H1 (cell line): ENCODE measurements at regions of chr9 and their contacts with region 1.

Region 1: GRCh38 chr9:136779808-136780207 is 11.3 kb upstream of the TMEM141 start:
- DNase-seq: no peak
- H3K4me3 ChIP-seq: no peak overlapping the region
- H3K27ac ChIP-seq: no peak overlapping the region
- H3K4me1 ChIP-seq: no peaks in the 10 kb centered on the region
- H3K27me3 ChIP-seq: peaks cover 0 to 4% (median 1%) of the 10 kb centered on the region in 4 experiments; a peak in 3 of 7 replicates
- CTCF ChIP-seq: peak in 1 of 3 experiments; percentile 15; a peak in 1 of 4 replicates
- EP300 ChIP-seq: no peak
- POLR2A ChIP-seq: no peak
- RAD21 ChIP-seq: no peak

Region 2: DNA sequence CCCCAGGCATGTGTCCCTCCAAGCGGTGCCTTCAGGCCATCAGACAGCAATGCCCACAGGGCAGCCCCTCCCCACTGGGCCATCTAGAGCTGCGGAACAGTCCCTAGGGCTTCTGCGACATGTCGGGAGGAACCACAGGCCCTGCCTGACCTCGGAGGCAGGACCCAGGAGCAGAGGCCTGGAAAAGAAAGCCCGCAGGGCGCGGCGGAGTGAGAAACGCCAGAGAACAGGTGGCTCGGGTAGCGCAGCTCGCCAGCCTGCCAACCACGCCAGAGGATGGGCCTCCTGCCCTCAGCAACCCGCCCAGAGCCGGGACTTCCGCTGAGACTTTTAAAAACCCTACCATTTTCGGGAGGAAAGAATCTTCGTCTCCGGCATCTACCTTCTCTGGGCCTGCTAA is 22.5 kb before region 1 on chr9:
- CTCF ChIA-PET with region 1: interaction called, 42 read pairs
- POLR2A ChIA-PET with region 1: no interaction called
- DNase-seq: no peak
- H3K4me3 ChIP-seq: no peak overlapping the region
- H3K27ac ChIP-seq: no peak overlapping the region
- H3K4me1 ChIP-seq: peaks cover 0 to 6% (median 2%) of the 10 kb centered on the region in 4 experiments; a peak in 4 of 7 replicates
- H3K27me3 ChIP-seq: no peaks in the 10 kb centered on the region
- CTCF ChIP-seq: no peak
- EP300 ChIP-seq: no peak
- POLR2A ChIP-seq: no peak
- RAD21 ChIP-seq: no peak

Region 3: DNA sequence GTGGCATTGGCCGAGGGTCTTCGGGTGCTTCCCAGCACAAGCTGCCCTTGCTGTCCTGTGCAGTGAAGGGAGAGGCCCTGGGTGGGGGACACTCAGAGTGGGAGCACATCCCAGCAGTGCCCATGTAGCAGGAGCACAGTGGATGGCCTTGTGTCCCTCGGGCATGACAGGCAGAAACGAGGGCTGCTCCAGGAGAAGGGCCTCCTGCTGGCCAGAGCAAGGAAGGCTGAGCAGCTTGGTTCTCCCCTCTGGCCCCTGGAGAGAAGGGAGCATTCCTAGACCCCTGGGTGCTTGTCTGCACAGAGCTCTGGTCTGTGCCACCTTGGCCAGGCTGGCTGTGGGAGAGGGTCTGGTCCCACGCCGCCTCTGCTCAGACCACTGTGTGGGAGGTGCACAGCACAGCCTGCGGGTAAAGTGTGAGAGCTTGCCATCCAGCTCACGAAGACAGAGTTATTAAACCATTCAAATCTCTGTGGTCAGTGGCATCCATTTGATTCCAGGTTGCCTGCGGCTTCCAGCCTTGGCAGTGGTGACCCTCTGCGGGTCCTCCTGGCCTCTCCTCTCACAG is 146.4 kb after region 1 on chr9:
- CTCF ChIA-PET with region 1: no interaction called
- POLR2A ChIA-PET with region 1: no interaction called
- DNase-seq: no peak
- H3K4me3 ChIP-seq: no peak overlapping the region
- H3K27ac ChIP-seq: no peak overlapping the region
- H3K4me1 ChIP-seq: no peaks in the 10 kb centered on the region
- H3K27me3 ChIP-seq: no peaks in the 10 kb centered on the region
- CTCF ChIP-seq: peak in 1 of 3 experiments; percentile 7; a peak in 1 of 4 replicates
- EP300 ChIP-seq: no peak
- POLR2A ChIP-seq: no peak
- RAD21 ChIP-seq: no peak